CD8-positive, alpha-beta T cell (primary cell): ENCODE measurements at regions of chr1 and their contacts with region 1.

Region 1: GRCh38 chr1:105874621-105875020 is 1181.9 kb upstream of the PRMT6 start:
- DNase-seq: no peak
- ATAC-seq: no peak
- H3K4me3 ChIP-seq: no peak overlapping the region
- H3K4me3 Mint-ChIP-seq: no peak overlapping the region
- H3K27ac ChIP-seq: no peak overlapping the region
- H3K27ac Mint-ChIP-seq: no peak overlapping the region
- H3K4me1 ChIP-seq: no peaks in the 10 kb centered on the region
- H3K4me1 Mint-ChIP-seq: no peaks in the 10 kb centered on the region
- H3K27me3 ChIP-seq: no peaks in the 10 kb centered on the region
- H3K27me3 Mint-ChIP-seq: no peaks in the 10 kb centered on the region
- CTCF ChIP-seq: no peak

Region 2: GRCh38 chr1:105608713-105609112 is 265.9 kb before region 1 on chr1:
- CTCF ChIA-PET with region 1: no interaction called
- POLR2A ChIA-PET with region 1: no interaction called
- intact Hi-C with region 1: no loop called
- DNase-seq: no peak
- ATAC-seq: no peak
- H3K4me3 ChIP-seq: no peak overlapping the region
- H3K4me3 Mint-ChIP-seq: no peak overlapping the region
- H3K27ac ChIP-seq: no peak overlapping the region
- H3K27ac Mint-ChIP-seq: no peak overlapping the region
- H3K4me1 ChIP-seq: no peaks in the 10 kb centered on the region
- H3K4me1 Mint-ChIP-seq: no peaks in the 10 kb centered on the region
- H3K27me3 ChIP-seq: no peaks in the 10 kb centered on the region
- H3K27me3 Mint-ChIP-seq: no peaks in the 10 kb centered on the region
- CTCF ChIP-seq: no peak

Region 3: DNA sequence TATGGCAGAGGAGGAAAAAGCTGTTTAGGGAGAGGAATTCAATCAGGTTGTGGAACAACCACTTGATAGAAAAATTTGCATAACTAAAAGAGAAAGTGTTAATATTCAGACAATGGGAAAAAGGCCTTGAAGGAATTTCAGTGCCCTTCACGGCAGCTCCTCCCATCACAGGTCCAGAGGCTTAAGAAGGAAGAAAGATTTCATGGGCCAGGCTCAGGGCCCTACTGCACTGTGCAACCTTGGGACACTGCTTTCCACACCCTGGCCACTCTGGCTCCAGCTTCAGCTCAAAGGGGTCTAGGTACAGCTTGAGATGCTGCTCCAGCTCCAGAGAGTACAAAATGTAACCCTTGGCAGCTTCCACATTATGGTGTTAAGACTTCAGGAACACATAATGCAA is 24.6 kb before region 1 on chr1:
- CTCF ChIA-PET with region 1: no interaction called
- POLR2A ChIA-PET with region 1: no interaction called
- intact Hi-C with region 1: loop called in 1 of 2 experiments (anchors 2 kb)
- DNase-seq: no peak
- ATAC-seq: no peak
- H3K4me3 ChIP-seq: no peak overlapping the region
- H3K4me3 Mint-ChIP-seq: no peak overlapping the region
- H3K27ac ChIP-seq: no peak overlapping the region
- H3K27ac Mint-ChIP-seq: no peak overlapping the region
- H3K4me1 ChIP-seq: no peaks in the 10 kb centered on the region
- H3K4me1 Mint-ChIP-seq: no peaks in the 10 kb centered on the region
- H3K27me3 ChIP-seq: no peaks in the 10 kb centered on the region
- H3K27me3 Mint-ChIP-seq: no peaks in the 10 kb centered on the region
- CTCF ChIP-seq: no peak

Region 4: GRCh38 chr1:105886309-105886708 is 11.7 kb after region 1 on chr1:
- CTCF ChIA-PET with region 1: no interaction called
- POLR2A ChIA-PET with region 1: no interaction called
- intact Hi-C with region 1: no loop called
- DNase-seq: no peak
- ATAC-seq: no peak
- H3K4me3 ChIP-seq: no peak overlapping the region
- H3K4me3 Mint-ChIP-seq: no peak overlapping the region
- H3K27ac ChIP-seq: no peak overlapping the region
- H3K27ac Mint-ChIP-seq: no peak overlapping the region
- H3K4me1 ChIP-seq: no peaks in the 10 kb centered on the region
- H3K4me1 Mint-ChIP-seq: no peaks in the 10 kb centered on the region
- H3K27me3 ChIP-seq: no peaks in the 10 kb centered on the region
- H3K27me3 Mint-ChIP-seq: no peaks in the 10 kb centered on the region
- CTCF ChIP-seq: no peak